IMR-90 (cell line): ENCODE measurements at regions of chr9 and their contacts with region 1.

Region 1: GRCh38 chr9:13279284-13280141 is at the start of gene MPDZ:
- DNase-seq: peak; percentile 66
- ATAC-seq: peak; percentile 76
- H3K4me3 ChIP-seq: peak within 1 kb of the TSS; percentile 66
- H3K27ac ChIP-seq: peak within 1 kb of the TSS; percentile 99
- H3K4me1 ChIP-seq: peaks cover 16% of the 10 kb centered on the region
- H3K27me3 ChIP-seq: no peaks in the 10 kb centered on the region
- CTCF ChIP-seq: no peak
- POLR2A ChIP-seq: no peak
- RAD21 ChIP-seq: no peak
- total RNA-seq, gene MPDZ: 39.3 and 46.4 TPM in 2 replicates

Region 2: DNA sequence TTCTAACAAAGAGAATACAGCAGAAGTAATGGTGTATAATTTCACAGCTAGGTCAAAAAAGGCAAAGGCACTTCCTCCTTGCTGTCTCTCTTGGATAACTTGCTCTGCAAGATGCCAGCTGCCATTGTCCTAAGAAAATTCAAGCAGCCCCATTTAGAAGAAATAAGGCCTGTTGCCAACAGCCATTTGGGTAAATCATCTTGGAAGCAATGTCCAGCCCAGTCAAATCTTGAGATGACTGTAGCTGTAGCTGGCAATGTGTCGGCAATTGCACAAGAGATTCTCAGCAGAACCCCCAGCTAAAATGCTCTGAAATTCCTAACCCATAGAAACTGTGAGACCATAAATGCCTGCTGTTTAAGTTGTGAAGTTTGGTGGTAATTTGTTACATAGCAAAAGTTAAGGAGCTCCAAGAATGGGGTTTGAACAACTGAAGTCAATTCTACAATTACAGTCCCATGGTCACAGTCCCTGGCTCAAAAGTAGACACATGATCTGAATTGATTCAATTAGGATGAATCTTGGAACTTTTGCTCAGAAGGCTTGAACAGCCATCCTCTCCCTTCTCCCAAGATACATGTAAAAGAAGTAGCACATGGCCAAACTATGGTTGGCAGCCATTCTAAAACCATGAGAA is 151.2 kb before region 1 on chr9:
- CTCF ChIA-PET with region 1: no interaction called
- POLR2A ChIA-PET with region 1: no interaction called
- dilution Hi-C with region 1: no loop called
- in situ Hi-C with region 1: no loop called
- intact Hi-C with region 1: loop called (anchors 10 kb)
- DNase-seq: no peak
- ATAC-seq: no peak; the same call in 1 of the 2 replicates
- H3K4me3 ChIP-seq: no peak overlapping the region
- H3K27ac ChIP-seq: no peak overlapping the region
- H3K4me1 ChIP-seq: peaks cover 3% of the 10 kb centered on the region; the same call in 1 of the 2 replicates
- H3K27me3 ChIP-seq: no peaks in the 10 kb centered on the region
- CTCF ChIP-seq: no peak
- POLR2A ChIP-seq: no peak
- RAD21 ChIP-seq: no peak

Region 3: DNA sequence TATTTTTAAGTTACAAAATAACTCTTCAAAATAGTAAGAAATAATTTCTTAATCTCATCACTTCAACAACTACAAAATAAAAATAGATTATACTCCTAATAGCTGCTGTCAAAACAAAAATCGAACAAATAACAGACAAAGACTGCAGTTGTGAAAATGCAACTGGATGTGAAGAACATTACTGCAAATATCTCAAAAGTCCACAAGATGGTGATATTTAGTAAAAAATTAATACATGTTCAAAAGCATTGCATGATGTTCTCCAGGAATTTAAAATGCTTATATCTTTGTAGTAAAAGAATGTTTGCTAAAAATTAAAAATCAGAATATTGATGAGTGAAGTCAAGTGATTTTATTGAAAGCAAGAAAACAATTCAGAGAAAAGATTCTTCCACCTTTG is 66.2 kb before region 1 on chr9:
- CTCF ChIA-PET with region 1: no interaction called
- POLR2A ChIA-PET with region 1: interaction called, 12 read pairs
- dilution Hi-C with region 1: no loop called
- in situ Hi-C with region 1: no loop called
- intact Hi-C with region 1: no loop called
- DNase-seq: peak; percentile 47
- ATAC-seq: no peak
- H3K4me3 ChIP-seq: no peak overlapping the region
- H3K27ac ChIP-seq: no peak overlapping the region
- H3K4me1 ChIP-seq: no peaks in the 10 kb centered on the region
- H3K27me3 ChIP-seq: no peaks in the 10 kb centered on the region
- CTCF ChIP-seq: peak; percentile 52
- POLR2A ChIP-seq: no peak
- RAD21 ChIP-seq: peak; percentile 53

Region 4: GRCh38 chr9:13244181-13244580 is 35.3 kb before region 1 on chr9:
- CTCF ChIA-PET with region 1: no interaction called
- POLR2A ChIA-PET with region 1: no interaction called
- dilution Hi-C with region 1: no loop called
- in situ Hi-C with region 1: no loop called
- intact Hi-C with region 1: no loop called
- DNase-seq: no peak
- ATAC-seq: no peak
- H3K4me3 ChIP-seq: no peak overlapping the region
- H3K27ac ChIP-seq: no peak overlapping the region
- H3K4me1 ChIP-seq: no peaks in the 10 kb centered on the region
- H3K27me3 ChIP-seq: no peaks in the 10 kb centered on the region
- CTCF ChIP-seq: no peak
- POLR2A ChIP-seq: no peak
- RAD21 ChIP-seq: no peak

Region 5: GRCh38 chr9:13351778-13352386 is 72.4 kb after region 1 on chr9:
- CTCF ChIA-PET with region 1: no interaction called
- POLR2A ChIA-PET with region 1: no interaction called
- dilution Hi-C with region 1: no loop called
- in situ Hi-C with region 1: no loop called
- intact Hi-C with region 1: loop called (anchors 5 kb)
- DNase-seq: peak; percentile 65
- ATAC-seq: peak; percentile 75
- H3K4me3 ChIP-seq: no peak overlapping the region
- H3K27ac ChIP-seq: no peak overlapping the region
- H3K4me1 ChIP-seq: peaks cover 2% of the 10 kb centered on the region; the same call in 1 of the 2 replicates
- H3K27me3 ChIP-seq: no peaks in the 10 kb centered on the region
- CTCF ChIP-seq: peak; percentile 73
- POLR2A ChIP-seq: no peak
- RAD21 ChIP-seq: peak; percentile 65